PC-9 (cell line): ENCODE measurements at regions of chr5 and their contacts with region 1.

Region 1: DNA sequence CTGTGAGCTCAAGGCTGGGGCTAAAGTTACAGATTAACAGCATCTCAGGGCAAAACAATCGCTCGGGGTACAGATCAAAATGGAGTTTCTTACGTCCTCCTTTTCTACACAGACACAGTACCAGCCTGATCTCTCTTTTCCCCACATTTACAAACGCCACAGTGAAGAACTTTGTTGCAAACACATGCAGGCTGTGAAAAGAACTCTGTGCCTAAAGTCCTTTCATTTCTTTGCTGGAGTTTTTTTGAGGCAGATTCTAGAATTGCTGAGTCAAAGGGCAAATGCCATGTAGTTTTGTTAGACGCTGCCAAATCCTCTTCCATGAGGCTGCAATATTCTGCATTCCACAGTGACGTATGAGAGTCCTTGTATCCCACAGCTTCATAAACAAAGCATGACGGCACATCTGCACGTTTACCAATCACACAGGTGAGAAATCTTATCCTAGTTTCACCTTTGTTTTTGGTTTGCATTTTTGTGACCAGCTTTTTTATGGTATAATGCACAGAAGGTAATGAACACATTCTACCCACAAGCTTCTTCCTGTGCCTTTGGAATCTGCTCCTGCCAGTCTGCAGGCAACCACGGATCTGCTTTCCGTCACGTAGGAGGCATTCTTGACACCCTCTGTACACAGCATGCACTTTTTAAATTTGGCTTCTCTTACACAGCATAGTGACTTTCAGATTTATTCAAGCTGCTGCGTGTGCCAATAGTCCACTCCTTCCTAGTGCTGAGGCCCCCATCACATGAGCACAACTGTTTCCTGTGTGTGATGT is 44.6 kb upstream of the LPCAT1 start:
- DNase-seq: peak; percentile 88 to 100
- H3K4me3 ChIP-seq: peak overlapping the region; percentile 16; the same call in 1 of the 2 replicates
- H3K27ac ChIP-seq: peak overlapping the region; percentile 76
- H3K4me1 ChIP-seq: peaks cover 61% of the 10 kb centered on the region
- H3K27me3 ChIP-seq: no peaks in the 10 kb centered on the region
- CTCF ChIP-seq: no peak

Region 2: DNA sequence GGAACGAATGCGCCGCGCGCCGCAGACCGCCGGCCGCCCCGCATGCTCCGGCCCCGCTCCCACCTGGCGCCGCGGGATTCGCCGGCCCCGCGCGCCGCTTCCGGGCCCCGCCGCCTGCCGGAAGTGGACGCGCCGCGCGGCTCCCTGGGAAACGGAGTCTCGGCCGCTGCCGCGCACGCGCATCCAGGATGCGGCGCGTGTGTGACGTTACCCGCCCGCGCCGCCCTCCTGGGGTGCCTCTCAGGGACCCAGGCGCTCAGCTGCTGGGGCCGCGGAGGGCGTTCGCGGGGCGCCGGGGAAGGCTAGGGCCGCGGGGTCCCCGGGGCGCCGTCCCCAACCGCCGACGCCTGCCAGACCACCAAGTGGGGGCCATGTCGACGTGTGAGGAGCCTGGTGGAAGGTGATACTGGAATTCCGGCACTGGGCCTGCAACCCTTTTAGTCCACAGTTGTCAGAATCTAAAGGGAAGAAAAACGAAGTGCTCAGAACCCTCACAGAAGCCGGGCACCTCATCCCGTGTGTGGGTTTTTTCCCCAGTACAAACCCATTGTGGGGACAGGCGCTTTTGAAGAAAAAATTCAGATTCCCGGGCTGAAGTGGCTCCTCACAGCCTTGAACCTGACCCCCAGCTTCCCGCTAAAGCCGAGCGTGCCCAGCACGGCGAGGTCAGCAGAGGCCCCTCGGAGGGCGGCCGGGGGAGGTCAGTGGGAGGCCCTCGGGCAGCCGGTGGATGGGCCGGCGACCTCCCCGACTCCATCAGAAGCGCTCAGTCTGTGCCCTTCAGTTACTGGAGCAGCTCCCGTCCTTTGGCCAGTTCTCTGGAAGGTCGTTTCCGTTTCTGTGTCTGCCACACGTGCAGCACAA is 223.2 kb before region 1 on chr5 and contains the start of gene CLPTM1L:
- CTCF ChIA-PET with region 1: interaction called, 14 read pairs
- POLR2A ChIA-PET with region 1: no interaction called
- intact Hi-C with region 1: no loop called
- DNase-seq: peak; percentile 78 to 96
- H3K4me3 ChIP-seq: peak within 1 kb of the TSS; percentile 90
- H3K27ac ChIP-seq: 0 out of 2 replicates have a peak within 1 kb of the TSS, but pooled peaks have one; percentile 10
- H3K4me1 ChIP-seq: peaks cover 18% of the 10 kb centered on the region
- H3K27me3 ChIP-seq: no peaks in the 10 kb centered on the region
- CTCF ChIP-seq: no peak
- total RNA-seq, gene CLPTM1L: 260 and 266 TPM in 2 replicates

Region 3: DNA sequence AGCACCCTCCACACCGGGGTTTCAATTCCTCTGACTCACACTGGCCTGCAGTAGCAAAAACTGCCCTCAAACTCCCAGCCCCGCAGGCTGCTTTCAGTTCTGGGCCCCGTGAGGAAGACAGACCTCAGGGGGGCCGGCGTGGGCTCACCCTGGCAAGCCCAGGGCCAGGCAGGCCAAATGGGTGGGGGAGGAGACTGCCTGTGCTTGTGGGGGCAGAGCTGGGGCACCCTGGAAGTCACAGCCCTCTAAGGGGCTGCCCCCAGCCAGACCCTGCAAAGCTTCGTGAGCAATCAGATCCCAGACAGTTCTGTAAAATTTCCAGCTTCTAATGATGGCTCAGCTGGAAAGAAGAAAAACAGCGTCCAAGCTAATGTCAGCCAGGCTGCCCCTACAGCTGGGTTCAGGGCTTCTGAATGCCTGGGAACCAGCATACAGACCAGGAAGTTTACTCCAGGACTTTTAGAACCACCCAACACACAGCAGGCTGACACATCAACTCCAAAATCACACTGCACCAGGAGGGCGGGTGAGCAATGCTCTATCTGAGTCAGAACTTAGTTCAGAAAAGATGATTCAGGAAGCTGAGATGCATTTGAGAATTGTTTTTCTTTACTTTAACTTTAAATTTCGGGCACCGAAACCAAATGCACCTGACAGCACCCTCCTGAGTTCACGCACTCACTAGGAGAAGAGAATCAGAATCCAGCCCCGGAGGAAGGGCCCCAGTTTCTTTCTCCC is 79.3 kb before region 1 on chr5:
- CTCF ChIA-PET with region 1: no interaction called
- POLR2A ChIA-PET with region 1: no interaction called
- intact Hi-C with region 1: no loop called
- DNase-seq: no peak
- H3K4me3 ChIP-seq: no peak overlapping the region
- H3K27ac ChIP-seq: no peak overlapping the region
- H3K4me1 ChIP-seq: no peaks in the 10 kb centered on the region
- H3K27me3 ChIP-seq: no peaks in the 10 kb centered on the region
- CTCF ChIP-seq: no peak

Region 4: GRCh38 chr5:1516751-1517601 is 51.4 kb before region 1 on chr5:
- CTCF ChIA-PET with region 1: interaction called, 3 read pairs
- POLR2A ChIA-PET with region 1: interaction called, 5 read pairs
- intact Hi-C with region 1: loop called (anchors 1 kb)
- DNase-seq: peak; percentile 38 to 86
- H3K4me3 ChIP-seq: peak overlapping the region; percentile 3; the same call in 1 of the 2 replicates
- H3K27ac ChIP-seq: peak overlapping the region; percentile 85
- H3K4me1 ChIP-seq: peaks cover 66% of the 10 kb centered on the region
- H3K27me3 ChIP-seq: no peaks in the 10 kb centered on the region
- CTCF ChIP-seq: no peak

Region 5: GRCh38 chr5:1522908-1523770 is 45.3 kb before region 1 on chr5:
- CTCF ChIA-PET with region 1: no interaction called
- POLR2A ChIA-PET with region 1: interaction called, 5 read pairs
- intact Hi-C with region 1: loop called (anchors 1 kb)
- DNase-seq: peak in 1 of 2 experiments; percentile 45
- H3K4me3 ChIP-seq: peak overlapping the region; percentile 52
- H3K27ac ChIP-seq: no peak overlapping the region
- H3K4me1 ChIP-seq: peaks cover 19% of the 10 kb centered on the region
- H3K27me3 ChIP-seq: no peaks in the 10 kb centered on the region
- CTCF ChIP-seq: no peak

Region 6: DNA sequence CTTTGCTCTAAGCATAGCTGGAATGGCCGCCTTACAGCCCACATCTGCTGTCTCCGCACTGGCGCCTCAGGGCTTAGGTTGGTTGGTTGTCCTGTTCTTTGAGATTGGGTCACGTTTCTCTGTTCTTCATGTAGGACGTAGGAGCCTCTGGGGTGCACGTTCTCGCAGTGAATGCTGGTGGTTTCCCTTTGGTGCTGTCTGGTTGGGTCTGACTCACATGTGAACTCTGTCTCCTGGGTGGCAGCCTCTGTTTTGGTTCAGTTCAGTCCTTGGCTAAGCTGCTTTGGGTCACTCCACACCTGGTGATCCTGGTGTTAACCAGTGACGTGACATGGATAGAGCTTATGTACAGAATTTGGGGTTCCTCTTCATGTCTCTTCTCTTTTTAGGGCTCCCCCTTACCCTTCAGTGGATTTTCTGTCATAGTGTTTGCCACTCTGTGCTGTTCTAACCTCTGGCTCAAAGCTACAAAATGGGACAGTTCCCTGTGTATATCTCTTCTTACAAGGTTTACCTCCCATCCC is 32.0 kb before region 1 on chr5:
- CTCF ChIA-PET with region 1: no interaction called
- POLR2A ChIA-PET with region 1: interaction called, 10 read pairs
- intact Hi-C with region 1: no loop called
- DNase-seq: no peak
- H3K4me3 ChIP-seq: no peak overlapping the region
- H3K27ac ChIP-seq: no peak overlapping the region
- H3K4me1 ChIP-seq: no peaks in the 10 kb centered on the region
- H3K27me3 ChIP-seq: no peaks in the 10 kb centered on the region
- CTCF ChIP-seq: no peak

Region 7: DNA sequence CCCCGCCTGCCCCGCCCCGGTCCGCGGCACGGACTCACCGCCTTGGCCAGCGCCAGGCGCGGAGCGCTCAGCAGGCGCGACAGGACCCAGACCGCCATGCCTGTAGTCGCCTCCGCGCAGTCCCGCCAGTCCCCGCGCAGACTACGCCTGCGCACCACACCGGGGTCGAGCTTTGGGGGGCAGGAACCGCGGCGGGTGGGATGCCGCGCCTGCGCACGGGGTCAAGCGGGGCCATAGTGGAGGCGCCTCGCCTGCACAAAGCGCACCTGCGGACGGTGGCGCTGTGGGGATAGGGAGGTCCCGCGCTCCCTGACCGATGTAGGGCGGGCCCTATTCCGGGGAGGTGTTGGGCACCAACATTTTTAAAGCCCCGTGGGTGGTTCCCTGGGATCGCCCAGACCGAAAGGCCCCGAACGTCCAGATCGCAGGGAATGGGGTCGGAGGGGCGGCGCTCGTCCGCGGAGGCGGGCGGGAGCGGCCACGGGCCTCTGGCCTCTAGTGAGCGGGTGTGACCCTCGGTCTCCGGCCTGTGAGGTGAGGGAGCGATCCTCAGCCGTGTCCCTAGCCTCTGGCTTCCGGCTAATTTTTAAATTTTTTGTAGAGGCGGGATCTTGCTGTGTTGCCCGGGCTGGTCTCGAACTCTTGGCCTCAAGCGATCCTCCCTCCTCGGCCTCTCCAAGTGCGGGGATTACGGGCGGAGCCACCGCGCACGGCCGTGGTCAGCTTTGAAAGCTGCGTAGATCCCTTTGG is 26.1 kb after region 1 on chr5:
- CTCF ChIA-PET with region 1: no interaction called
- POLR2A ChIA-PET with region 1: no interaction called
- intact Hi-C with region 1: loop called (anchors 1 kb)
- DNase-seq: peak in 1 of 2 experiments; percentile 85
- H3K4me3 ChIP-seq: no peak overlapping the region
- H3K27ac ChIP-seq: no peak overlapping the region
- H3K4me1 ChIP-seq: peaks cover 5% of the 10 kb centered on the region; the same call in 1 of the 2 replicates
- H3K27me3 ChIP-seq: no peaks in the 10 kb centered on the region
- CTCF ChIP-seq: no peak